ENCODE measurements at regions of chr14 and their contacts with region 1.

Region 1: GRCh38 chr14:68466491-68467032 is 326.3 kb downstream of the ZFP36L1 start:
- DNase-seq: peak; percentile 91
- H3K4me3 ChIP-seq: no peak overlapping the region
- H3K27ac ChIP-seq: peak overlapping the region; percentile 84
- H3K4me1 ChIP-seq: peaks cover 78% of the 10 kb centered on the region
- H3K27me3 ChIP-seq: no peaks in the 10 kb centered on the region
- CTCF ChIP-seq: no peak

Region 2: DNA sequence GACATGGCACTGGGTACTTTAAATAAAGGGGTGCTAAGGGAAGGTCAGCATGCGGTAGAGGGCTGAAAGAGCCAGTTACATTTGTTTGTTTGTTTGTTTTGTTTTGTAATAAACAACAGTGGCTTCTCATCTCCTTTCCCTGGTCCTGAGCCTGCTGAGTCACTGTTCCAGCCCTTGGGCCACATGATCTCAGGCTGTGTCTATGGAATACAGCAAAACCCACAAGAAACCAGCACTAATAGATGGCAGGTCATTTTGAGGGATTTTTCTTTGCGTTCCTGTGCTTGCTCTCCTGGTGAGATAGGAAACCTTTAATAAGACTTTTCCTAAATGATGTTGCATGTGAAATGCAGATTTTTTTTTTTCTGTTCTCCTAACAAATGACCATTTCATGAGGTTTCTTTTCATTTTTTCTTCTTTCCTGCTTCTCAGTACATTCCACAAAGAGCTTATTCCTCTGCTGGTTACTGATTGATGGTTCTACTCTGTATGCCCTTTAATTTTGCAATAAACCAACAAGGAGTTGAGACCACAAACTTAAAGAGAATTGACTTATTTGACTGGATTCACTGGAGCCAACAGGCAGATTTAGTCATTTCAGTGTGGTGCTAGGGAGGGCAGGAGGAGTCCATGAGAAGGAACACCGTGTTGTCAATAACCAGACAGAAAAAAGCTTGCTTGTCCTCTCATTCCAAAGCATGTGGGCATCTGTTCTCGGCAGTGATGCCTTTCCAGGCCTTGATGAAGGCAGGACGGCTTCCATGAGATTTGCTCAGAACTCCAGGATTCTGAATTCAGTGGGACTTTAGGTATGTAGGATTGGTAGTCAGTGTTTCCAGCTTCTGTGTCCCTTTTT is 187.8 kb before region 1 on chr14:
- CTCF ChIA-PET with region 1: no interaction called
- dilution Hi-C with region 1: no loop called
- in situ Hi-C with region 1: no loop called
- intact Hi-C with region 1: no loop called
- DNase-seq: peak; percentile 30
- H3K4me3 ChIP-seq: no peak overlapping the region
- H3K27ac ChIP-seq: no peak overlapping the region
- H3K4me1 ChIP-seq: peaks cover 4% of the 10 kb centered on the region
- H3K27me3 ChIP-seq: no peaks in the 10 kb centered on the region
- CTCF ChIP-seq: no peak

Region 3: GRCh38 chr14:68401855-68402254 is 64.7 kb before region 1 on chr14:
- CTCF ChIA-PET with region 1: no interaction called
- dilution Hi-C with region 1: no loop called
- in situ Hi-C with region 1: no loop called
- intact Hi-C with region 1: loop called (anchors 5 kb)
- DNase-seq: no peak
- H3K4me3 ChIP-seq: no peak overlapping the region
- H3K27ac ChIP-seq: peak overlapping the region; percentile 83
- H3K4me1 ChIP-seq: peaks cover 77% of the 10 kb centered on the region
- H3K27me3 ChIP-seq: no peaks in the 10 kb centered on the region
- CTCF ChIP-seq: no peak

Region 4: GRCh38 chr14:68535404-68536017 is 68.9 kb after region 1 on chr14:
- CTCF ChIA-PET with region 1: no interaction called
- dilution Hi-C with region 1: no loop called
- in situ Hi-C with region 1: loop called in 1 of 2 experiments (anchors 5 kb)
- intact Hi-C with region 1: no loop called
- DNase-seq: peak; percentile 76
- H3K4me3 ChIP-seq: no peak overlapping the region
- H3K27ac ChIP-seq: peak overlapping the region; percentile 95
- H3K4me1 ChIP-seq: peaks cover 18% of the 10 kb centered on the region
- H3K27me3 ChIP-seq: no peaks in the 10 kb centered on the region
- CTCF ChIP-seq: no peak

Region 5: GRCh38 chr14:68577827-68578541 is 111.4 kb after region 1 on chr14:
- CTCF ChIA-PET with region 1: no interaction called
- dilution Hi-C with region 1: no loop called
- in situ Hi-C with region 1: no loop called
- intact Hi-C with region 1: loop called (anchors 2 kb)
- DNase-seq: peak; percentile 96
- H3K4me3 ChIP-seq: no peak overlapping the region
- H3K27ac ChIP-seq: peak overlapping the region; percentile 82
- H3K4me1 ChIP-seq: peaks cover 40% of the 10 kb centered on the region
- H3K27me3 ChIP-seq: no peaks in the 10 kb centered on the region
- CTCF ChIP-seq: no peak

Region 6: DNA sequence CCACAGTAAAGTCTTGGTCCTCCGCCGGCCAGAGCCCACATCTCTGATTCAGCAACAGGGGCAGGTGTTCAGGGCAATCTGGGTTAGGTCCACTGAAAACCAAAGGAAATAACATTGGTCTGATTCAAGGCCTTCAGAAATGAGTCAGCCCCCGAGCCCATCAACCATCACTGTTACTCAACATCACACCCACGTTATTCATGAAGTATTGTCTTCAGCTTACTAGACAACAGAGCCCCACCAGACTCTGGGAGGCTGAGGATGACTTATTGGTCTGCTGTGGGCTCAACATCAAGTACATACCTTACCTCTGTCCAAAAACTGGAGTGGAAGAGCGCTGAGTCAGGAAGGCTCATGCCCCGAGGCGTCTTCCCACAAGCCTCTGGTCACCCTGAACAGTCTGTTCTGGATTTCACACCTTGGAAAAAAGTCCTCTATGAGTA is 228.8 kb after region 1 on chr14:
- CTCF ChIA-PET with region 1: no interaction called
- dilution Hi-C with region 1: no loop called
- in situ Hi-C with region 1: no loop called
- intact Hi-C with region 1: loop called (anchors 2 kb)
- DNase-seq: peak; percentile 100
- H3K4me3 ChIP-seq: no peak overlapping the region
- H3K27ac ChIP-seq: peak overlapping the region; percentile 91
- H3K4me1 ChIP-seq: peaks cover 32% of the 10 kb centered on the region
- H3K27me3 ChIP-seq: no peaks in the 10 kb centered on the region
- CTCF ChIP-seq: no peak

Measured in mammary epithelial cell (primary cell).